A673 (cell line): ENCODE measurements at regions of chr4 and their contacts with region 1.

Region 1: GRCh38 chr4:7192252-7193029 is at the start of gene SORCS2:
- DNase-seq: peak; percentile 77
- H3K4me3 ChIP-seq: peak within 1 kb of the TSS; percentile 25
- H3K27ac ChIP-seq: no peak within 1 kb of the TSS
- H3K4me1 ChIP-seq: peaks cover 12% of the 10 kb centered on the region
- H3K27me3 ChIP-seq: peaks cover 89% of the 10 kb centered on the region
- CTCF ChIP-seq: peak; percentile 54
- total RNA-seq, gene SORCS2: 0.04 and 0.06 TPM in 2 replicates

Region 2: GRCh38 chr4:7295911-7296660 is 103.6 kb after region 1 on chr4:
- CTCF ChIA-PET with region 1: interaction called, 3 read pairs
- POLR2A ChIA-PET with region 1: no interaction called
- intact Hi-C with region 1: loop called (anchors 2 kb)
- DNase-seq: peak; percentile 22
- H3K4me3 ChIP-seq: no peak overlapping the region
- H3K27ac ChIP-seq: no peak overlapping the region
- H3K4me1 ChIP-seq: no peaks in the 10 kb centered on the region
- H3K27me3 ChIP-seq: no peaks in the 10 kb centered on the region
- CTCF ChIP-seq: peak; percentile 51

Region 3: GRCh38 chr4:7335344-7336069 is 143.1 kb after region 1 on chr4:
- CTCF ChIA-PET with region 1: interaction called, 4 read pairs
- POLR2A ChIA-PET with region 1: no interaction called
- intact Hi-C with region 1: loop called (anchors 5 kb)
- DNase-seq: peak; percentile 52
- H3K4me3 ChIP-seq: no peak overlapping the region
- H3K27ac ChIP-seq: no peak overlapping the region
- H3K4me1 ChIP-seq: no peaks in the 10 kb centered on the region
- H3K27me3 ChIP-seq: no peaks in the 10 kb centered on the region
- CTCF ChIP-seq: peak; percentile 74

Region 4: DNA sequence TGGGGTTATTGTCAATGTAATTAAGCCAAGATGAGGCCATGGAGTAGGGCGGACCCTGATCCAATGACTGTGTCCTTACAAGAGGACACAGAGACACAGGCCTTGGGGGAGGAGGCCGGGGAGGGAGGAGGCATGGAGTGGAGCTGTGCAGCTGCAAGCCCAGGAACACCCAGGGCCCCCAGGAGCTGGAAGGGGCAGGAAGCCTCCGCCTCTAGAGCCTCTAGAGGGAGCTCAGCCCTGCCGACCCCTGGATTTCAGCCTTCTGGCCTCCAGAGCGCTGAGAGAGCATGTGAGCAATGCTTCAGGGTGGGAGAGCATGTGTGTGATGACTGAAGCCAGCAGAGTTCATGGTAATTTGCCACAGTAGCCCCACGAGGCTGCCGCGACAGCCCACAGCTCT is 512.6 kb after region 1 on chr4:
- CTCF ChIA-PET with region 1: no interaction called
- POLR2A ChIA-PET with region 1: no interaction called
- intact Hi-C with region 1: no loop called
- DNase-seq: no peak
- H3K4me3 ChIP-seq: no peak overlapping the region
- H3K27ac ChIP-seq: no peak overlapping the region
- H3K4me1 ChIP-seq: no peaks in the 10 kb centered on the region
- H3K27me3 ChIP-seq: peaks cover 2% of the 10 kb centered on the region
- CTCF ChIP-seq: no peak

Region 5: DNA sequence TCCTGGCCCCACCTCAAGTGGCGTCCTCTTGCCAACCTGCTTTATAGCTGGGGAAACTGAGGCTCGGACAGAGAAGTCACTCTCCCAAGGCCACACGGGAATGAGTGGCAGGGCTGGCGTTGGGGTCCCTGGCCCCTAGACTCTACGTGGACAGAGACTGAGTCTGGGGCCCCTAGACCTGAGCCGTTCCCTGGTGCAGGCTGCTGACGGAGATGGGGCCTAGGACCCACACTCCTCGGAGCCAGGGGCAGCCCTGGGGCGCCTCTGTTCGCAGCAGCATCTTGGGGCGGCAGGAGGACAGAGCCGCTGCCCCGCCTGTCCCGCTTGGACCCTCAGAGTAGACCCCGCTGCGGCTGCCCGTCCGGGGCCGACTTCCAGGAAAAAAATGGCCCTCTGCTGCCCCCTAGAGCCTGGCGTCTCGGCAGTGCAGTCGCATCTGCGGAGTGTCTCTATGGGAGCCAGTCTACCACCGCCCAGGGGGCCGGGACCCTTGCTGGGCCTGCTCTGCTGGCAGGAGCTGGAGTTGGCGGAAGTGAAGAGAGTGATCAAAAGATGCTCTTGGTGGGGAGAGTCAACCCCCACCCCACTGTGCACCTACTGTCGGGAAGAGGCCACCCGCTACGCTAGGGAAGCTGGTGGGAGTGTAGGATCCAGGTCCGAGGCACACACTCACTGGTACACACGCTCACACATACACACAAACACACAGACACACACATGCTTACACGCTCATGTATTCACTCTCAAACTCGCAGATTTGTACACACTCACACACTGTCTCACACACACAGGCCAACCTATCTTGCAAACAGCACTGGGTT is 527.1 kb after region 1 on chr4:
- CTCF ChIA-PET with region 1: interaction called, 4 read pairs
- POLR2A ChIA-PET with region 1: no interaction called
- intact Hi-C with region 1: loop called (anchors 1 kb)
- DNase-seq: peak; percentile 69
- H3K4me3 ChIP-seq: no peak overlapping the region
- H3K27ac ChIP-seq: no peak overlapping the region
- H3K4me1 ChIP-seq: no peaks in the 10 kb centered on the region
- H3K27me3 ChIP-seq: peaks cover 7% of the 10 kb centered on the region
- CTCF ChIP-seq: peak; percentile 91